ENCODE measurements at regions of chr4 and their contacts with region 1.

Region 1: GRCh38 chr4:40648742-40649281 is 19.1 kb upstream of the RBM47 start:
- DNase-seq: peak in 4 of 7 donors; percentile 25 to 55 (median 42)
- H3K4me3 ChIP-seq: no peak overlapping the region
- H3K27ac ChIP-seq: no peak overlapping the region
- H3K4me1 ChIP-seq: peaks cover 0 to 5% of the 10 kb centered on the region in 2 donors
- H3K27me3 ChIP-seq: no peaks in the 10 kb centered on the region
- CTCF ChIP-seq: no peak
- POLR2A ChIP-seq: no peak

Region 2: GRCh38 chr4:40525811-40526598 is 122.8 kb before region 1 on chr4:
- intact Hi-C with region 1: no loop called
- DNase-seq: peak; percentile 74 to 90 (median 84)
- H3K4me3 ChIP-seq: no peak overlapping the region
- H3K27ac ChIP-seq: peak overlapping the region; percentile 79 to 91 (median 87)
- H3K4me1 ChIP-seq: peaks cover 39 to 40% of the 10 kb centered on the region in 2 donors
- H3K27me3 ChIP-seq: no peaks in the 10 kb centered on the region
- CTCF ChIP-seq: no peak
- POLR2A ChIP-seq: peak in 1 of 2 donors; percentile 62

Region 3: GRCh38 chr4:40699648-40700047 is 50.8 kb after region 1 on chr4:
- intact Hi-C with region 1: loop called (anchors 10 kb)
- DNase-seq: no peak
- H3K4me3 ChIP-seq: no peak overlapping the region
- H3K27ac ChIP-seq: no peak overlapping the region
- H3K4me1 ChIP-seq: no peaks in the 10 kb centered on the region
- H3K27me3 ChIP-seq: no peaks in the 10 kb centered on the region
- CTCF ChIP-seq: no peak
- POLR2A ChIP-seq: no peak

Measured in adrenal gland (tissue), 19 donors.